Common myeloid progenitor, CD34-positive (primary cell): ENCODE measurements at regions of chr10 and their contacts with region 1.

Region 1: GRCh38 chr10:99845837-99846382 is 63.5 kb downstream of the ABCC2 start:
- DNase-seq: peak; percentile 90 to 95 (median 93)
- H3K4me3 ChIP-seq: peak overlapping the region in 5 of 7 experiments; percentile 40 to 72 (median 63)
- H3K27ac ChIP-seq: no peak overlapping the region
- H3K4me1 ChIP-seq: peaks cover 1 to 21% (median 11%) of the 10 kb centered on the region in 4 experiments
- H3K27me3 ChIP-seq: peaks cover 0 to 3% (median 0%) of the 10 kb centered on the region in 5 experiments

Region 2: DNA sequence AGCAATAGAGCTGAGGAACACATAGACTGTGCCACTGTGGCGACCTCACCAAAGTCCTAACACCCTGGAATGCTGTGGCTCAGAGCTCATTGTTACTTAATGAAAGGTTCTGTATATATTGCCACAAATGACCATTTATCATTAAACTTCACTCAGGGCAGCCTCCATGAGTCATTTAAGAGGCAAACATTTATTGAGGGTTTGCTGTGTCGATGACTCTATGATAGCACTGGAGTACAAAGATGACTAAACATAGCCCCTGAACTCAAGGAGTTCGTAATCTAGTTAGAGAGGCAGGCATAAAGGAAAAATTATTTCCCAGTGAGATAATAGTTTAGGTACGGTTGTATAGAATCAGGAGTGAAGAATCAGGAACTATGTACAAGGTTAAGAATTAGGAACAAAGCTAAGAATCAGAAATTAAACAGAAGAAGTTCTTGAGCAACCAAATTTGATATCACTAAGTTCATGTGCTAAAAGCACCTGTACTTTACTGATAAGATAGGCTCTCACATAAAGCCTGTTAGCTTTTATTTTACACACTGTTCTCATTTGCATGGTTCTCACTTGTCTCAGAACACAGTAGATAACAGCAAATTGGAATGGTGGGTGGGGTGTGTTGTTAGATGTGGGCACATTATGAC is 178.7 kb before region 1 on chr10:
- CTCF ChIA-PET with region 1: no interaction called
- POLR2A ChIA-PET with region 1: no interaction called
- DNase-seq: peak in 1 of 3 donors; percentile 35
- H3K4me3 ChIP-seq: no peak overlapping the region
- H3K27ac ChIP-seq: no peak overlapping the region
- H3K4me1 ChIP-seq: no peaks in the 10 kb centered on the region
- H3K27me3 ChIP-seq: no peaks in the 10 kb centered on the region

Region 3: GRCh38 chr10:99798031-99798430 is 47.9 kb before region 1 on chr10:
- CTCF ChIA-PET with region 1: no interaction called
- POLR2A ChIA-PET with region 1: no interaction called
- DNase-seq: no peak
- H3K4me3 ChIP-seq: no peak overlapping the region
- H3K27ac ChIP-seq: no peak overlapping the region
- H3K4me1 ChIP-seq: no peaks in the 10 kb centered on the region
- H3K27me3 ChIP-seq: no peaks in the 10 kb centered on the region

Region 4: DNA sequence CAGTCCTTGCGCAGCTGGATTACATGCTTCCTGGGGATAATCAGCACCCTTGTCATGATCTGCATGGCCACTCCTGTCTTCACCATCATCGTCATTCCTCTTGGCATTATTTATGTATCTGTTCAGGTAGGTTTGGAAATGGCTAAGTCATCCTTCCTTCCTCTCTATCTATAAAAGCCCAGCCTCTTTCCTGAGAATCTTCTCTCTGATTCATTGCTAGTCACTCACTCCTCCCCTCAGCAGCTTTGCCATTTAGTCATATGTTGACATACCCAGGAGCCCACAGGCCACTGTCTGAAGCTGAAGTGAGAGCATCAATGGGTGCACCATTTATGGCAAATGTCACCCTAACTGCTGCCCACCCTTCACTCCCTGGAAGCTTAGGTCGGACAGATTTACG is 11.5 kb before region 1 on chr10:
- CTCF ChIA-PET with region 1: interaction called, 21 read pairs
- POLR2A ChIA-PET with region 1: no interaction called
- DNase-seq: no peak
- H3K4me3 ChIP-seq: no peak overlapping the region
- H3K27ac ChIP-seq: no peak overlapping the region
- H3K4me1 ChIP-seq: no peaks in the 10 kb centered on the region
- H3K27me3 ChIP-seq: peaks cover 0 to 2% (median 0%) of the 10 kb centered on the region in 5 experiments

Region 5: DNA sequence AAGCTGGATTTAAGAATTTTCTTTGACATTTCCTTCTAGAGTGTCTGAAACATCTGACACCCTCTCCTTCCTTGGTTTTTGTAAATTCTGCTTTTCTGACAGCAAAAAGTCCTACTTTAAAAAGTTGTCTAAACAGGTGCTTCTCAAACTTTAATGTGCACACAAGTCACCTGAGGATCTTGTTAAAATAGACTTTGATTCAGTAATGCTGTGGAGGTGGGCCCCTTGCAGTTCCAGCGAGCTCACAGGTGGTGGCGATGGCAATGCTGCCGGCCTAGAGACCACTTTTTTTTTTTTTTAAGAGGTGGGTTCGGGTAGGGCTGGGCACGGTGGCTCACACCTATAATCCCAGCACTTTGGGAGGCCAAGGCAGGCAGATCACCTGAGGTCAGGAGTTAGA is 13.7 kb after region 1 on chr10:
- CTCF ChIA-PET with region 1: interaction called, 10 read pairs
- POLR2A ChIA-PET with region 1: no interaction called
- DNase-seq: peak; percentile 31 to 52 (median 45)
- H3K4me3 ChIP-seq: no peak overlapping the region
- H3K27ac ChIP-seq: no peak overlapping the region
- H3K4me1 ChIP-seq: no peaks in the 10 kb centered on the region
- H3K27me3 ChIP-seq: peaks cover 0 to 21% (median 0%) of the 10 kb centered on the region in 5 experiments

Region 6: GRCh38 chr10:99973190-99973589 is 127.3 kb after region 1 on chr10:
- CTCF ChIA-PET with region 1: no interaction called
- POLR2A ChIA-PET with region 1: no interaction called
- DNase-seq: peak; percentile 8 to 17 (median 13)
- H3K4me3 ChIP-seq: no peak overlapping the region
- H3K27ac ChIP-seq: no peak overlapping the region
- H3K4me1 ChIP-seq: peaks cover 0 to 12% (median 3%) of the 10 kb centered on the region in 4 experiments
- H3K27me3 ChIP-seq: no peaks in the 10 kb centered on the region

Region 7: GRCh38 chr10:100009793-100010676 is 164.1 kb after region 1 on chr10 and contains the start of gene DNMBP:
- CTCF ChIA-PET with region 1: interaction called, 15 read pairs
- POLR2A ChIA-PET with region 1: no interaction called
- DNase-seq: peak; percentile 84 to 94 (median 93)
- H3K4me3 ChIP-seq: peak within 1 kb of the TSS; percentile 74 to 98 (median 85)
- H3K27ac ChIP-seq: peak within 1 kb of the TSS in 1 of 2 experiments; percentile 55
- H3K4me1 ChIP-seq: peaks cover 5 to 41% (median 17%) of the 10 kb centered on the region in 4 experiments
- H3K27me3 ChIP-seq: peaks cover 0 to 3% (median 0%) of the 10 kb centered on the region in 5 experiments

Region 8: GRCh38 chr10:100046021-100046486 is 200.1 kb after region 1 on chr10:
- CTCF ChIA-PET with region 1: interaction called, 83 read pairs
- POLR2A ChIA-PET with region 1: no interaction called
- DNase-seq: peak; percentile 74 to 88 (median 83)
- H3K4me3 ChIP-seq: no peak overlapping the region
- H3K27ac ChIP-seq: no peak overlapping the region
- H3K4me1 ChIP-seq: peaks cover 0 to 8% (median 3%) of the 10 kb centered on the region in 4 experiments
- H3K27me3 ChIP-seq: no peaks in the 10 kb centered on the region

Region 9: GRCh38 chr10:100229819-100230422 is 384.0 kb after region 1 on chr10:
- CTCF ChIA-PET with region 1: no interaction called
- POLR2A ChIA-PET with region 1: no interaction called
- DNase-seq: no peak
- H3K4me3 ChIP-seq: peak overlapping the region in 6 of 7 experiments; percentile 74 to 100 (median 96)
- H3K27ac ChIP-seq: peak overlapping the region; percentile 88 to 91
- H3K4me1 ChIP-seq: peaks cover 0 to 19% (median 3%) of the 10 kb centered on the region in 4 experiments
- H3K27me3 ChIP-seq: no peaks in the 10 kb centered on the region